ENCODE measurements at regions of chr9 and their contacts with region 1.

Region 1: GRCh38 chr9:128818099-128818838 is at the start of gene ENDOG:
- DNase-seq: peak; percentile 97 to 99
- H3K4me3 ChIP-seq: peak within 1 kb of the TSS; percentile 95
- H3K4me3 Mint-ChIP-seq: peak within 1 kb of the TSS; percentile 77
- H3K27ac Mint-ChIP-seq: peak within 1 kb of the TSS; percentile 29
- H3K4me1 ChIP-seq: no peaks in the 10 kb centered on the region; the same call in none of the 2 replicates
- H3K4me1 Mint-ChIP-seq: peaks cover 15% of the 10 kb centered on the region
- H3K27me3 ChIP-seq: no peaks in the 10 kb centered on the region
- H3K27me3 Mint-ChIP-seq: no peaks in the 10 kb centered on the region
- CTCF ChIP-seq: peak; percentile 94 to 95
- total RNA-seq, gene ENDOG: 25.9 and 30.0 TPM in 2 replicates

Region 2: DNA sequence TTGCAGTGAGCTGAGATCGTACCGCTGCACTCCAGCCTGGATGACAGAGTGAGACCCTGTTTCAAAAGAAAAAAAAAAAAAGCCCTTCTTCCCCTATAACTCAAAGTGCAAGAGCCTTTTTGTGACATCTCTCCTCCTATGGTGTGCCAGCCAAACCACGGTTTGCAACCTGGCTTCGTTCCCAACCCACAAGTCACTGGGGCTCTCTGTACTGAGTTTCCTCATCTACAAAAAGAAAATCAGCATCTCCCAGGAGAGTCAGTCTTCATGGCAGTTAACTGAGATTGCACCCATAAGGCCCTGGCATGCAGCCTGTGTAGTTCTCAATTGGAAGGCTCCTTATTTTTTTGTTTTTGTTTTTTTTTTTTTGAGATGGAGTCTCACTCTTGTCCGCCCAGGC is 347.7 kb before region 1 on chr9:
- CTCF ChIA-PET with region 1: no interaction called
- POLR2A ChIA-PET with region 1: no interaction called
- intact Hi-C with region 1: no loop called
- DNase-seq: no peak
- H3K4me3 ChIP-seq: no peak overlapping the region
- H3K4me3 Mint-ChIP-seq: no peak overlapping the region
- H3K27ac Mint-ChIP-seq: no peak overlapping the region
- H3K4me1 ChIP-seq: no peaks in the 10 kb centered on the region
- H3K4me1 Mint-ChIP-seq: no peaks in the 10 kb centered on the region
- H3K27me3 ChIP-seq: no peaks in the 10 kb centered on the region
- H3K27me3 Mint-ChIP-seq: no peaks in the 10 kb centered on the region
- CTCF ChIP-seq: no peak

Region 3: DNA sequence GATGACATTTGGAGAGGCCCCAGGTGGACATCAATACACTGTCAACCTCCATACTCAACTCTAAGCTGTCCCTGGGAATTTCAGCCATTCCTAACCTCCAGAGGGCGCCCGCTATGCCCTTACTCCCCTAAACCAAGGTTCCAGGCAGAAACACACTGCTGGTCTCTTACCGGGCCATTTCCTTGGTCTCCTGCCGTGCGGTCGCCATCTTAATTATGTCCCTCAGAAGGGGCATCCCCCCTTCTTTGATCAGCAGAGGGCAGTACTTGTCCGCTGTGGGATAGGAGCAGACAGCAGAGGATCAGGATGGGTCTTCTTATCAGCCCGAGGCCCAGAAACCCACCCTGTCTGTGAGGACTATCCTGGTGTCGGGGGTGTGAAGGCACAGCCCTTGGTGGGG is 85.0 kb before region 1 on chr9:
- CTCF ChIA-PET with region 1: interaction called, 6 read pairs
- POLR2A ChIA-PET with region 1: no interaction called
- intact Hi-C with region 1: loop called (anchors 2 kb)
- DNase-seq: peak; percentile 74 to 77
- H3K4me3 ChIP-seq: no peak overlapping the region
- H3K4me3 Mint-ChIP-seq: no peak overlapping the region
- H3K27ac Mint-ChIP-seq: no peak overlapping the region
- H3K4me1 ChIP-seq: no peaks in the 10 kb centered on the region
- H3K4me1 Mint-ChIP-seq: no peaks in the 10 kb centered on the region
- H3K27me3 ChIP-seq: no peaks in the 10 kb centered on the region
- H3K27me3 Mint-ChIP-seq: no peaks in the 10 kb centered on the region
- CTCF ChIP-seq: peak; percentile 50 to 66

Region 4: DNA sequence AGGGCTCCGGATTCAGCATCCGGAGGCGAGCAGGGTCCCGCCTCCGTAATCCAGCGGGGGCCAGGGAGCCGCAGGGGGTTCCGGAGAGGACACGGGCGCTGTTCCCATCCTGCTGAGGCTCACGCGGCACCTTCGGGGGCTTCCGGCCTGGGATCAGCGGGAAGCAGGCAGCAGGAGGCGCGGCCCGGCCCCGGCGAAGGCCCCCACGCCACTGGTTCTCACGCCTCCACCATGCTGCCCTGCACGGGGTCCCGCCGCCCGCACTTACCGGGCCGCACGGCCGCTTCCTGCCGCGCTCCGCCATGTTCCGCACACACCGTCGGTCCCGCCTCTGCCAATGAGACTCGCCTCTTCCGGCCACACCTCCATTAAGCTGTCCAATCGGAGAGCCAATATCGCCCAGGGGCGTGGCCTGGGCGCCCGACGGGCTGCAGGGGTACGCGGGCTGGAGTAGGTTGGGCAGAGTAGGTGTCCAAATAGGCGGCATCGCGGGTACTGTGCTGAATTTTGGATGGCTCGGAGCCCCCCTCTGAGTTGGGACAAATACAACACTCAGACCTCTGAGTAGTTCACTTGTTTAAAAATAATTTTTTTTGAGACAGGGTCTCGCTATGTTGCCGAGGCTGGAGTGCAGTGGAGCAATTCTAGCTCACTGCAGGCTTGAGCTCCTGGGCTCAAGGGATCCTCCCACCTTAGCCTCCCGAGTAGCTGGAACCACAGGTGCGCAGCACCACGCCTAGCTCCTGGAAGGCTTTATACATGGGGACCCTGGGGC is 11.4 kb after region 1 on chr9 and contains the start of gene SPOUT1:
- CTCF ChIA-PET with region 1: interaction called, 42 read pairs
- POLR2A ChIA-PET with region 1: interaction called, 43 read pairs
- intact Hi-C with region 1: no loop called
- DNase-seq: peak; percentile 95 to 96
- H3K4me3 ChIP-seq: peak within 1 kb of the TSS; percentile 80
- H3K4me3 Mint-ChIP-seq: peak within 1 kb of the TSS; percentile 98
- H3K27ac Mint-ChIP-seq: peak within 1 kb of the TSS; percentile 95
- H3K4me1 ChIP-seq: no peaks in the 10 kb centered on the region; the same call in 1 of the 2 replicates
- H3K4me1 Mint-ChIP-seq: peaks cover 10% of the 10 kb centered on the region
- H3K27me3 ChIP-seq: no peaks in the 10 kb centered on the region
- H3K27me3 Mint-ChIP-seq: no peaks in the 10 kb centered on the region
- CTCF ChIP-seq: no peak
- total RNA-seq, gene SPOUT1: 76.2 and 88.0 TPM in 2 replicates

Region 5: GRCh38 chr9:128861511-128861910 is 43.2 kb after region 1 on chr9:
- CTCF ChIA-PET with region 1: no interaction called
- POLR2A ChIA-PET with region 1: no interaction called
- intact Hi-C with region 1: no loop called
- DNase-seq: no peak
- H3K4me3 ChIP-seq: no peak overlapping the region
- H3K4me3 Mint-ChIP-seq: no peak overlapping the region
- H3K27ac Mint-ChIP-seq: no peak overlapping the region
- H3K4me1 ChIP-seq: peaks cover 4% of the 10 kb centered on the region; the same call in 1 of the 2 replicates
- H3K4me1 Mint-ChIP-seq: no peaks in the 10 kb centered on the region
- H3K27me3 ChIP-seq: no peaks in the 10 kb centered on the region
- H3K27me3 Mint-ChIP-seq: no peaks in the 10 kb centered on the region
- CTCF ChIP-seq: no peak

Region 6: DNA sequence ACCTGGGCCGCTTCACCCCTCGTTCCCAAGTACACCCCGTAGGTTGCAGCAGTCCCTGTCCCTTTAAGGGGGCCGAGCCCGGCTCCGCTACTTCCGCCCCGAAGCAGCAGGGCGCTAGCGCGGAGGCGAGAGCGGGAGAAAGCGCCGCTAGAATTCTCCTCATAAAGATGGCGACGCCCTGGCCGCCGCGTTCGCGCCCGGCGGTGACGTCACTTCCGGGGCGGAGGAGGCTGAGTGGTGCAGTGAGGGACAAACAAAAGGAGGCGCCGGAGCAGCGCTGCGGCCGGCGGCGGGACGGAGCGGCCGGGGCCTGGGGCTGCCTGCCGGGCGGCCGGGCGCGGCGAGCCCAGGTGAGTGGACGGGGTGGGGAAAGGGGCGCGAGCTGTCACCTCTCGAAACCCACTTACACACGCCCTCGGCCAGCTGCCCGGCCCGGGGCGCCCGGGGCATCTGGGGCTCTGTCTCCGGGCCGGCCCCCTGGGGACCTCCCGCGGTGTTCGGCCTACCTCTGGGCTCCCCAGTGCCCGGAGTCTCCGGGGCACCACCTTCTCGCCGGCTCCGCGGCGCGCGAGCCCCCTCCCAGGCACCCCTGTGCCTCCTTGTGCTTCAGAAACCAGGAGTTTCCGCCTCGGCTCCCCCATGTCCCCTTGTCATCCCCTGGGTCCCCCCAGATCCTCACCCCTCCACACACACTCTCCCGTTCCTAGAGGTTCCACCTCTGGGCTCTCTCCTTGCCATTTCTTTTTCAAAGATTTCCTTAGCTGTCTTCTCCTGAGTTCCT is 63.8 kb after region 1 on chr9 and contains the starts of genes KYAT1 and LRRC8A:
- CTCF ChIA-PET with region 1: interaction called, 6 read pairs
- POLR2A ChIA-PET with region 1: no interaction called
- intact Hi-C with region 1: loop called (anchors 5 kb)
- DNase-seq: peak; percentile 95 to 97
- H3K4me3 ChIP-seq: peak within 1 kb of the TSS; percentile 69
- H3K4me3 Mint-ChIP-seq: peak within 1 kb of the TSS; percentile 97
- H3K27ac Mint-ChIP-seq: peak within 1 kb of the TSS; percentile 96
- H3K4me1 ChIP-seq: peaks cover 16% of the 10 kb centered on the region
- H3K4me1 Mint-ChIP-seq: peaks cover 6% of the 10 kb centered on the region
- H3K27me3 ChIP-seq: no peaks in the 10 kb centered on the region
- H3K27me3 Mint-ChIP-seq: no peaks in the 10 kb centered on the region
- CTCF ChIP-seq: peak in 1 of 2 experiments; percentile 1
- total RNA-seq, gene KYAT1: 6.9 and 7.8 TPM in 2 replicates
- total RNA-seq, gene LRRC8A: 21.9 and 22.4 TPM in 2 replicates

Region 7: GRCh38 chr9:129028192-129028957 is 210.1 kb after region 1 on chr9 and contains the start of gene SH3GLB2:
- CTCF ChIA-PET with region 1: interaction called, 11 read pairs
- POLR2A ChIA-PET with region 1: no interaction called
- intact Hi-C with region 1: no loop called
- DNase-seq: peak; percentile 95 to 96
- H3K4me3 ChIP-seq: peak within 1 kb of the TSS; percentile 73
- H3K4me3 Mint-ChIP-seq: peak within 1 kb of the TSS; percentile 84
- H3K27ac Mint-ChIP-seq: peak within 1 kb of the TSS; percentile 86
- H3K4me1 ChIP-seq: peaks cover 28% of the 10 kb centered on the region
- H3K4me1 Mint-ChIP-seq: peaks cover 36% of the 10 kb centered on the region
- H3K27me3 ChIP-seq: no peaks in the 10 kb centered on the region
- H3K27me3 Mint-ChIP-seq: no peaks in the 10 kb centered on the region
- CTCF ChIP-seq: peak; percentile 83 to 91
- total RNA-seq, gene SH3GLB2: 64.2 and 66.7 TPM in 2 replicates